HEK293 (cell line): ENCODE measurements at regions of chr17 and their contacts with region 1.

Region 1: DNA sequence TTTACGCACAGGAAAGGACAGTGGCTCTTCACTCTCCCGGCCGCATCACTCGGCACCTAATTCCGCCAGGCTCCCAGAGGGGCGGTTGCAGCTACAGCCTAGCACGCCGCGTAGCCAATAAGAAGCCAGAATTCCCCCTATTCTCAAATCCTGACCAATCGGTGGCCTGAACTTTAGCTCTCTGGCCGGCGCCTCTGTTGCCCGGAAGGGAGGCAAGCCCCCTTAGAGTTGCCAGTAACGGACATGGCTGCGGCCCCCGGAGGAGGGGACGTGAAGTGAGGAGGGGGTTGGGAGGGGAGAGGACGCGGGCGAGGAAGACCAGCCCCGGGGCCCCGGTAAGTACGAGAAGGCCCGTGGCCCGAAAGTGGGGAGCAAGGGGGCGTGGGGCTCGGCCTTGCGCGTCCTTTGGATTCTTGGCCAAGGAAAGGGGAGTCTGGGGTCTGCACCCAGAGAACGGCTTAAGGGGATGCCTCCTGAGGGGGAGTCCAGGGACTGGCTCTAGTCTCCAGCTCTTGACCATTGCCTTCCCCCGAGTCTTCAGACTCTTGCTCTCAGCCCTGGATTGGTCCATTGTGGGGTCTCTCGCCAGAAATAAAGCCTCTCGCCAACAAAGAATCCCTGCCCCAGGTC is at the start of gene TMEM94:
- H3K4me3 ChIP-seq: peak within 1 kb of the TSS; percentile 64
- H3K27ac ChIP-seq: peak within 1 kb of the TSS; percentile 84
- H3K4me1 ChIP-seq: peaks cover 20% of the 10 kb centered on the region
- CTCF ChIP-seq: no peak

Region 2: DNA sequence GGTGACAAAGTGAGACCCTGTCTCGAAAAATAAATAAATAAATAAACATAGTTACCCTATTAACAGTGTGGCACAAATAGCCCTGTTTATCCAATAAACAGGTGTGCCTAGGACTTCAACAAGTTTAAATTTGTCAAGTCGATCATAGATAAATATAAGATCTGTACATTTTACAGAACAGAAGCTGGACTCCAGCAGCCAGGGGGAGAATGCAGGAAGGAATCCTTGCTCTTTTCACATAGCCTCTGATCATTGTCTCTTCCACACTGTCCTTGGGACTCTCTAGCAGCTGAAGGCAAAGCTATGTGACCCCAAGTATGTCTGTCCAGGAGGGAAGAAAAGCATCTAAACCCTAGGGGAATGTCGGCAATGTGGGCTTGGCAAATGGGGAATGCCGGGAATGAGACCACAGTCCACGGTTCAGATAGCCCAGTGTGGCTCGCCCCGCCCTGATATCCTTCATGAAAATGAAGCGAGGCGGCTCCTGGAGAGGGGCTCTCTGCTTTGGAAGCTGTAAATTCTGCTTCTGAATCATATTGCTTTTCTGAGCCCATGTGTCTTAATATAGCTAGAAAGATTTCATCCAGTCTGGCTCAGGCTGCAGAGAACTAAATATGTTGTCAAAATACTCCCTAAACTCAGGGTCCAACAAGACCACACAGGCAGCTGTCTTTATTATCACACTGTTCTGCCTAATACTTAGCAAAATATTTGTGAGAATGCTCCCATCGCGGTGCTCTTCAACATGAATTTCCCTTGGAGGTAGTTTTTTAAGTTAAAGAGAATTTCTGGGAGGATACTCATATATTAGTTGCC is 26.2 kb before region 1 on chr17:
- CTCF ChIA-PET with region 1: interaction called, 12 read pairs
- POLR2A ChIA-PET with region 1: interaction called, 9 read pairs
- H3K4me3 ChIP-seq: peak overlapping the region; percentile 3
- H3K27ac ChIP-seq: no peak overlapping the region
- H3K4me1 ChIP-seq: no peaks in the 10 kb centered on the region; the same call in 1 of the 2 replicates
- CTCF ChIP-seq: no peak

Region 3: GRCh38 chr17:75481194-75482068 is 24.9 kb after region 1 on chr17:
- CTCF ChIA-PET with region 1: no interaction called
- POLR2A ChIA-PET with region 1: interaction called, 12 read pairs
- H3K4me3 ChIP-seq: no peak overlapping the region
- H3K27ac ChIP-seq: no peak overlapping the region
- H3K4me1 ChIP-seq: peaks cover 2% of the 10 kb centered on the region; the same call in 1 of the 2 replicates
- CTCF ChIP-seq: no peak

Region 4: GRCh38 chr17:75498726-75499213 is 42.2 kb after region 1 on chr17:
- CTCF ChIA-PET with region 1: no interaction called
- POLR2A ChIA-PET with region 1: interaction called, 16 read pairs
- H3K4me3 ChIP-seq: no peak overlapping the region
- H3K27ac ChIP-seq: 0 out of 2 replicates have a peak overlapping the region, but pooled peaks have one; percentile 17
- H3K4me1 ChIP-seq: no peaks in the 10 kb centered on the region
- CTCF ChIP-seq: peak; percentile 41